ENCODE measurements at regions of chr12 and their contacts with region 1.

Region 1: GRCh38 chr12:56189176-56189917 is at the start of gene SMARCC2:
- DNase-seq: peak; percentile 87
- H3K4me3 Mint-ChIP-seq: peak within 1 kb of the TSS; percentile 85
- H3K27ac Mint-ChIP-seq: peak within 1 kb of the TSS; percentile 93
- H3K4me1 Mint-ChIP-seq: peaks cover 38% of the 10 kb centered on the region
- H3K27me3 Mint-ChIP-seq: no peaks in the 10 kb centered on the region
- CTCF ChIP-seq: peak; percentile 75
- total RNA-seq, gene SMARCC2: 52.1 and 57.0 TPM in 2 replicates

Region 2: GRCh38 chr12:55847603-55848291 is 341.6 kb before region 1 on chr12:
- CTCF ChIA-PET with region 1: no interaction called
- POLR2A ChIA-PET with region 1: no interaction called
- intact Hi-C with region 1: no loop called
- DNase-seq: peak; percentile 97
- H3K4me3 Mint-ChIP-seq: peak overlapping the region; percentile 52
- H3K27ac Mint-ChIP-seq: peak overlapping the region; percentile 99
- H3K4me1 Mint-ChIP-seq: peaks cover 20% of the 10 kb centered on the region
- H3K27me3 Mint-ChIP-seq: no peaks in the 10 kb centered on the region
- CTCF ChIP-seq: no peak

Region 3: GRCh38 chr12:56127888-56128669 is 61.3 kb before region 1 on chr12 and contains the start of gene ESYT1:
- CTCF ChIA-PET with region 1: interaction called, 15 read pairs
- POLR2A ChIA-PET with region 1: interaction called, 85 read pairs
- intact Hi-C with region 1: loop called (anchors 1 kb)
- DNase-seq: peak; percentile 100
- H3K4me3 Mint-ChIP-seq: peak within 1 kb of the TSS; percentile 84
- H3K27ac Mint-ChIP-seq: peak within 1 kb of the TSS; percentile 84
- H3K4me1 Mint-ChIP-seq: peaks cover 26% of the 10 kb centered on the region
- H3K27me3 Mint-ChIP-seq: no peaks in the 10 kb centered on the region
- CTCF ChIP-seq: no peak
- total RNA-seq, gene ESYT1: 111 and 123 TPM in 2 replicates

Region 4: GRCh38 chr12:56158029-56158925 is 31.1 kb before region 1 on chr12 and contains the start of gene MYL6:
- CTCF ChIA-PET with region 1: interaction called, 36 read pairs
- POLR2A ChIA-PET with region 1: interaction called, 92 read pairs
- intact Hi-C with region 1: no loop called
- DNase-seq: peak; percentile 98
- H3K4me3 Mint-ChIP-seq: peak within 1 kb of the TSS; percentile 97
- H3K27ac Mint-ChIP-seq: peak within 1 kb of the TSS; percentile 100
- H3K4me1 Mint-ChIP-seq: peaks cover 35% of the 10 kb centered on the region
- H3K27me3 Mint-ChIP-seq: no peaks in the 10 kb centered on the region
- CTCF ChIP-seq: no peak
- total RNA-seq, gene MYL6: 716 and 997 TPM in 2 replicates

Region 5: DNA sequence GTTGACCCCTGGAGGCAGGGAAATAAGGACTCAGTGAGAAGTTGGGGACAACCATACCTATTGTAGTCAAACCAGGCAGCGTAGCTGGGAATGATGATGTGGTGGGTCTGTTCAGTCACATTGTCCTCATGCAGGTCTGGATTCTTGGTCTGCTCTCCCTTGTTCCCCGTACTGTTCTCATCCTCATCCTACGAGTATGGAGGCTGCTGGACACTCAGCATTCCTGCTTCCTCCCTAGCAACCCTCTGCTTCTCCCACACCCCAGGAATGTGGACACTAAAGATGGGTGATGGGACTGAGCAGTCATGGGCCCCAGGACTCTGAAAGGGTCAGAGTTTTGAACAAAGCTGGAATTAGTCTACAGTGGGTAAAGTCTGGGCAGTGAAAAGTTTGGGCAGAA is 11.0 kb before region 1 on chr12:
- CTCF ChIA-PET with region 1: interaction called, 9 read pairs
- POLR2A ChIA-PET with region 1: interaction called, 14 read pairs
- intact Hi-C with region 1: no loop called
- DNase-seq: no peak
- H3K4me3 Mint-ChIP-seq: no peak overlapping the region
- H3K27ac Mint-ChIP-seq: no peak overlapping the region
- H3K4me1 Mint-ChIP-seq: no peaks in the 10 kb centered on the region
- H3K27me3 Mint-ChIP-seq: no peaks in the 10 kb centered on the region
- CTCF ChIP-seq: no peak

Region 6: GRCh38 chr12:56258057-56258819 is 68.9 kb after region 1 on chr12 and contains the start of gene ANKRD52:
- CTCF ChIA-PET with region 1: interaction called, 4 read pairs
- POLR2A ChIA-PET with region 1: interaction called, 5 read pairs
- intact Hi-C with region 1: loop called (anchors 2 kb)
- DNase-seq: peak; percentile 70
- H3K4me3 Mint-ChIP-seq: peak within 1 kb of the TSS; percentile 84
- H3K27ac Mint-ChIP-seq: peak within 1 kb of the TSS; percentile 71
- H3K4me1 Mint-ChIP-seq: peaks cover 29% of the 10 kb centered on the region
- H3K27me3 Mint-ChIP-seq: no peaks in the 10 kb centered on the region
- CTCF ChIP-seq: peak; percentile 59
- total RNA-seq, gene ANKRD52: 46.3 and 73.8 TPM in 2 replicates